ENCODE measurements at regions of chr2 and their contacts with region 1.

Region 1: DNA sequence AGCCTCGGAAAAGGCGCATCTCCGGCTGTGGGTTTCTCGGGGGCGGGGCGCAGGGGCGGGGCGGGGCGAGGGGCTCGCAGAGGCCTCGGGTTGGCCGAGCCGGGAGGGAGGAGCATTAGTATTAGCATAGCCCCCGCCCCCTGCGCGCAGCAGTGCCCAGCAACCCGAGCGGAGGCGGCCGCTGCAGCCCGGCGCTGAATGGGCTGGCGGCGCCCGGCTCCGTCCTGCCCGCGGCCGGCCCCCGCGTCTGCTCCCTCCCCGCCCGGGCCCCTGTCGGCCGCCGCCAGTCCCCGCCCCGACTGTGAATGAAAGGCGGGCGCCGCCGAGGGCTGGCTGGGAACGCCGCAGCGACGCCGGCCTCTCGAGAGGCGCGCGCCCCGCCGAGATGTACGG is at the start of gene EFR3B:
- DNase-seq: peak; percentile 95 to 98 (median 97)
- H3K4me3 ChIP-seq: peak within 1 kb of the TSS; percentile 49 to 89 (median 64)
- H3K27ac ChIP-seq: peak within 1 kb of the TSS in 4 of 5 donors; percentile 49 to 75 (median 68)
- H3K4me1 ChIP-seq: peaks cover 10 to 20% of the 10 kb centered on the region in 2 donors
- H3K27me3 ChIP-seq: no peaks in the 10 kb centered on the region
- CTCF ChIP-seq: peak in 3 of 6 experiments; percentile 14 to 23 (median 15)
- POLR2A ChIP-seq: peak; percentile 30 to 33
- total RNA-seq, gene EFR3B: 1.8 to 10.6 (median 2.7) TPM

Region 2: GRCh38 chr2:24993406-24994145 is 48.3 kb before region 1 on chr2:
- intact Hi-C with region 1: loop called in 1 of 2 experiments (anchors 5 kb)
- DNase-seq: peak in 1 of 7 donors; percentile 18
- H3K4me3 ChIP-seq: no peak overlapping the region
- H3K27ac ChIP-seq: no peak overlapping the region
- H3K4me1 ChIP-seq: peaks cover 4 to 7% of the 10 kb centered on the region in 2 donors
- H3K27me3 ChIP-seq: no peaks in the 10 kb centered on the region
- CTCF ChIP-seq: no peak
- POLR2A ChIP-seq: no peak

Measured in adrenal gland (tissue), 19 donors.